ENCODE measurements at regions of chr2 and their contacts with region 1.

Region 1: DNA sequence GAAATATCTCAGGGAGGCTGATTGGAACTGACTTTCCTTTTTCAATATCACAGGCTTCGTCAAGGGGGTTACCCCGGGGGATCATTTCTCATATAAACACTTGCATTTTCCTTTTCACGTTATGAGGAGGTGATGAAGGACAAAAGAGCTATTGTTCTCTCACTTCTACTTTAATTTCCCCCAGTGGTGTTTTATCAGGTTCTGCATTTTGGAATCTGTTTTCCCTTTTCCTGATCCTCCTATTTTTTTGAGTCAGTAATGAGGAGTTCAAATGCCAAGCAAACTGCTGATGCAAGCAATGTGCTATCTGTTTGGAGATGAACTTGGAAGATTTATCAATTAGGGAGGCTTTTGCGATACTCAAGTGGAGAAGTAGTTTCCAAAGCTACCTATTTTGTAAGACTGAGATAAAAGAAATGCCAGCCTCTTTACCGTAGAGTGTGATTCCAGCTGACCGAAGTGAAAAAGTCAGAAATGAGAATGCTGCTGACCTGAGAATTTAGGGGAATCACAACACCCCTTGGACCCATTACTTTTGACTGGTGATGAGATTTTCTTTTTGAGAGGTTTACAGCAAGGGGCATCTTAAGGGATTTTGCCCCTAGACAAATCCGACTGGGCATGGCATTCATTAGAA is 556.0 kb downstream of the RNF144A start:
- DNase-seq: no peak
- ATAC-seq: no peak
- H3K4me3 Mint-ChIP-seq: no peak overlapping the region
- H3K27ac Mint-ChIP-seq: peak overlapping the region; percentile 88
- H3K4me1 Mint-ChIP-seq: peaks cover 53% of the 10 kb centered on the region
- H3K27me3 Mint-ChIP-seq: no peaks in the 10 kb centered on the region
- CTCF ChIP-seq: no peak

Region 2: GRCh38 chr2:7517088-7517487 is 43.8 kb after region 1 on chr2:
- CTCF ChIA-PET with region 1: interaction called, 5 read pairs
- POLR2A ChIA-PET with region 1: interaction called, 3 read pairs
- intact Hi-C with region 1: loop called (anchors 5 kb)
- DNase-seq: peak; percentile 69
- ATAC-seq: peak; percentile 88
- H3K4me3 Mint-ChIP-seq: peak overlapping the region; percentile 30
- H3K27ac Mint-ChIP-seq: peak overlapping the region; percentile 92
- H3K4me1 Mint-ChIP-seq: peaks cover 76% of the 10 kb centered on the region
- H3K27me3 Mint-ChIP-seq: no peaks in the 10 kb centered on the region
- CTCF ChIP-seq: no peak

Region 3: DNA sequence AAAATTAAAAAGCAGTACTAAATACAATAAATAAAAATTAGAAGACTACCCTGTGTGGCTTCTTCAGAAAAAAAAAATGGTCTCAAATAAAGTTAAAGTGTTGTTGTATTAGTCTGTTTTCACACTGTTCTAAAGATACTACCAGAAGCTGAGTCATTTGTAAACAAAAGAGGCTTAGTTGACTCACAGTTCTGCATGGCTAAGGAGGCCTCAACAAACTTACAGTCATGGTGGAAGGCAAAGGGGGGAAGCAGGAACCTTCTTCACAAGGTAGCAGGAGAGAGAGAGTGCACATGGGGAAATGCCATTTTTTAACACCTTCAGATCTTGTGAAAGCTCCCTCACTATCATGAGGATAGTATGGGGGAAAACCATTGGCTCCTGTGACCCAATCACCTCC is 56.7 kb after region 1 on chr2:
- CTCF ChIA-PET with region 1: no interaction called
- POLR2A ChIA-PET with region 1: no interaction called
- intact Hi-C with region 1: no loop called
- DNase-seq: no peak
- ATAC-seq: peak; percentile 69
- H3K4me3 Mint-ChIP-seq: no peak overlapping the region
- H3K27ac Mint-ChIP-seq: peak overlapping the region; percentile 74
- H3K4me1 Mint-ChIP-seq: peaks cover 63% of the 10 kb centered on the region
- H3K27me3 Mint-ChIP-seq: no peaks in the 10 kb centered on the region
- CTCF ChIP-seq: no peak